Activated B cell treated with CpG ODN at 0.5 μM for 24 hours (primary cell): ENCODE measurements at regions of chr18 and their contacts with region 1.

Region 1: DNA sequence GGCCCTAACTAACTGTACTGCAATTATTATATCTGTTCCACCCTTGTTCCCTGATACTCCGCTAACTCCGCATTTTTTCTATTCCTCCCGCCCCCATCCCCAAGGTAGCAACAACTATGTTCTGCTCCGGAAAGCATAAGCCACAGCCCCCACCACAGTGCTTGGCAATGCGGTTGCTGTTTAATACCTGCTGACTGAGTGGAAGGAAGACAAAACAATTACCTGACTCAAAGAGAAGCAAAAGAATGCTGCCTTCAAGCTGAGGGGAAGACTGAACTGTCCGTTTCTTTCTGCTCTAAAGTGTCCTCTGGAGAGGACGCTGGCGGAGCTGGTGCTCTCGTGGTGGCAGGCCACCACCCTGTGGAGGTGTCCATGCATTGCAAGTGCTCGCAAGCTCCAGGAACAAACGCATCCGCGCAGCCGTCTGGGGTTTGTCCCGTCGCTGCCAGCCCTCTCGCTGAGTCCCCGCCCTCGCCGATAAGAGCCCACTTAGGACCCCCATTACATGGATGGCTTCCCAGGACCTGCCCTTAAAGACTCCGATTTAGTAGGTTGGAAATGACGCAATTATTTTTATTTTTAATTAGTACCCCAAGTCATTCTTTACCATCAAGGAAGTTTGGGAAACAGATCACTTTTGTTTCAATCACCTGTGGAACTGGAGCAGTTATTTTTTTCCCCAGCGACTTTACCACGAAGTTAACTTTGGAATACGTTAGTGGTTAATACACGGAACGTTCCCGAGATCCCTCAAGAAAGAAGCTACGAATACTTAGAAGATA is 1.6 kb upstream of the MYL12A start:
- DNase-seq: peak; percentile 65
- ATAC-seq: peak; percentile 62
- H3K4me3 Mint-ChIP-seq: peak overlapping the region; percentile 94
- H3K27ac Mint-ChIP-seq: peak overlapping the region; percentile 99
- H3K4me1 Mint-ChIP-seq: peaks cover 44% of the 10 kb centered on the region
- H3K27me3 Mint-ChIP-seq: no peaks in the 10 kb centered on the region
- CTCF ChIP-seq: peak; percentile 54

Region 2: GRCh38 chr18:2618009-2618408 is 628.0 kb before region 1 on chr18:
- CTCF ChIA-PET with region 1: no interaction called
- POLR2A ChIA-PET with region 1: no interaction called
- intact Hi-C with region 1: no loop called
- DNase-seq: no peak
- ATAC-seq: no peak
- H3K4me3 Mint-ChIP-seq: no peak overlapping the region
- H3K27ac Mint-ChIP-seq: no peak overlapping the region
- H3K4me1 Mint-ChIP-seq: peaks cover 3% of the 10 kb centered on the region
- H3K27me3 Mint-ChIP-seq: no peaks in the 10 kb centered on the region
- CTCF ChIP-seq: no peak

Region 3: DNA sequence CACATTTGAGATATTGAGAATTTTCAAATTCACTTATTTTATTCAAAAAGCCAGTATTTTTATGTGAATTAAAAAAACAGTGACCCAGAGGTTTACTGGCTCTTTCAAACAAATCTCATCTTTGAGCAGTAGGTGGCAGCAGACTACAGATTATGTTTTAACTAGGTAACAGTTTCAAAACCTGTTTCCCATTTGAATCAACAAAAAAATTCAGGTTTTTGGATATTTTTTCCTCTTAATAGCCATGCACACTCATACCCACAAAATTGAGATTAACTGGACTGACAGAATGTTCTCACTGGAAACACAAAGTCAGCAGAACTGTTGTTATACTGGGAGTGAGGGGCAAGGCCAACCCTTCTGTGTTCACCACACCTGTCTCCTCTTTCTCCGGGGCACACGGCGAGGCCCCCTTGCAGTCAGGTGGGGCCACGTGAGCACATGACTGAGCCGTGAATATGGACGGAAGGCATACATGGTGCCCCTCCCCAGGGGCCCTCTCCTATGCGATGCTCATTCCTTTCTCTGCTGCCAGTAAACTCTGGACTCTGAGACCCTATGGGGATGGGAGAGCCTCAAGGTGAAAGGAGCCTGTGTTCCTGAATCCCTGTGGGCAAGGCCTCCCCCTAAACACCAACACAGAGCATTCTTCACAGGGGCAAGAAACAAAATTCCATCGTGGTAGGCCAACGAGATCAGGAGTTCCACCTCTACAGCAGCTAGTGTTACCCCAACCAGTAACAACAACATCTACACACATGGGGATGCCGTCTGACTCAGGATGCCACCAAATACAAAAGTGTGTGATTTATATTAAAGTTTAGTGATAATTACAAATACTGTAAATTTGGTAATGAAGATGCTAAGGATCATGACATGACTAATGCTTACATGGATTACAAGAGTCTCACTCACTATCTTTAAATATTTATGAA is 313.5 kb before region 1 on chr18:
- CTCF ChIA-PET with region 1: interaction called, 34 read pairs
- POLR2A ChIA-PET with region 1: interaction called, 7 read pairs
- intact Hi-C with region 1: loop called (anchors 1 kb)
- DNase-seq: no peak
- ATAC-seq: peak; percentile 66
- H3K4me3 Mint-ChIP-seq: no peak overlapping the region
- H3K27ac Mint-ChIP-seq: peak overlapping the region; percentile 76
- H3K4me1 Mint-ChIP-seq: peaks cover 8% of the 10 kb centered on the region
- H3K27me3 Mint-ChIP-seq: no peaks in the 10 kb centered on the region
- CTCF ChIP-seq: peak; percentile 49

Region 4: DNA sequence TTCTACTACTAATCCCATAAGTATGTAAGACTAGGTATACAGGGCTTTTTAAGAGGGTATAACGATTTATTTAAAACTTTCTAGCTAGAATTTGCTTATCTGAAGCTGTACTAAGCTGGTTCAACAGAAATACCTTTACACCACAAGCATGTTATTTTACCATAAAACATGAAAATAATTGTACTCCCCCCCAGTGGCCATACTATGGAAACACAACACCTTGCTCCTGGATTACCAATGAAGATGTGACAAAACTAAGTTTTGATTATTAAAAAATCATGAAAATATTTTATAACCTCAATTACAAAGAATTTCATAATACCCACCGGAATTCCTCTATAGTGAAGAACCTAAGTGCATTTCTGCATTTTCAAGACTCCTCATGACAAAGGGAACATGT is 260.4 kb before region 1 on chr18:
- CTCF ChIA-PET with region 1: interaction called, 47 read pairs
- POLR2A ChIA-PET with region 1: interaction called, 41 read pairs
- intact Hi-C with region 1: loop called (anchors 1 kb)
- DNase-seq: no peak
- ATAC-seq: peak; percentile 82
- H3K4me3 Mint-ChIP-seq: no peak overlapping the region
- H3K27ac Mint-ChIP-seq: no peak overlapping the region
- H3K4me1 Mint-ChIP-seq: peaks cover 55% of the 10 kb centered on the region
- H3K27me3 Mint-ChIP-seq: no peaks in the 10 kb centered on the region
- CTCF ChIP-seq: no peak

Region 5: GRCh38 chr18:3117493-3118192 is 128.4 kb before region 1 on chr18:
- CTCF ChIA-PET with region 1: interaction called, 5 read pairs
- POLR2A ChIA-PET with region 1: interaction called, 5 read pairs
- intact Hi-C with region 1: loop called (anchors 1 kb)
- DNase-seq: no peak
- ATAC-seq: no peak
- H3K4me3 Mint-ChIP-seq: no peak overlapping the region
- H3K27ac Mint-ChIP-seq: no peak overlapping the region
- H3K4me1 Mint-ChIP-seq: no peaks in the 10 kb centered on the region
- H3K27me3 Mint-ChIP-seq: peaks cover 2% of the 10 kb centered on the region
- CTCF ChIP-seq: no peak

Region 6: DNA sequence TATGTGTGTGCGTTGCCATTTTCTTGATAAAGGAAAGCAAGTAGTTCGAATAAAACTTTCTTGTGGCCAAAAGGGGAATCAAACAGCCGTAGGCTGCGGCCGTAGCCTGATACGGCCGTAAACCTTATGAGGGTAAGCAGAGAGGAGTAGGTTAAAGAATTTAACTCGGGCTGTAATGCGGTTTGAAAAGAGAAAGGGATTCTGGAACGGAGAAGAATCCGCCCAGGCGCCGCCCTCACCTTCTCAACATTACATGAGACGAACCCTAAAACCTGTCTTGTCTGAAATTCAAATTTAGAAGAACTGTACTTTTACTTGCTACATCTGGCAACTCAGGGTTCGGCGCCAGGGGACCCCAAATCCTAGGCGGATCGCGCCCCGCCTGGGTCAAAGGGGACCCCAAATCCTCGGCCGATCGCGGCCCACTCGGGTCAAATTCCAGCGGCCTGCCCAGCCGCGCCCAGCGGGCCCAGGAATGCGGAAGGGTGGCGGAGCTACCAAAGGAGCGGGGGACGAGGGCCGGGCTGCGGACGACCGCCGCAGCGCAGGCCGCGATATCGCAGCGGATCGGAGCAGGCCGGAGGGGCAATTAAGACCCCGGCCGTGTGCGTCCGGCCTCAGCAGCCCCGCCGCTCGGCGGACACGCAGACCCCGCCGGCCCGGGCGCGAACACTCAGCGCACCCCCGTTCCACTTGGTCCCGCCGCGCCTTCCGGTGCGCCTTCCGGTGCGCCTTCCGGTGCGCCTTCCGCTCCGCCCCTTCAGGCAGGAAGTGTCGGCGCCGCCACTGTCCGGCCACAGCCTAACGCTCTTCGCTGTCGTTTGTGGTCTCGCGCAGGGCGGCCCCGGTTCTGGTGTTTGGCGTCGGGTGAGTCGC is 15.6 kb after region 1 on chr18 and contains the start of gene MYL12B:
- CTCF ChIA-PET with region 1: interaction called, 11 read pairs
- POLR2A ChIA-PET with region 1: interaction called, 166 read pairs
- intact Hi-C with region 1: loop called (anchors 1 kb)
- DNase-seq: peak; percentile 81
- ATAC-seq: peak; percentile 83
- H3K4me3 Mint-ChIP-seq: peak within 1 kb of the TSS; percentile 94
- H3K27ac Mint-ChIP-seq: peak within 1 kb of the TSS; percentile 97
- H3K4me1 Mint-ChIP-seq: peaks cover 80% of the 10 kb centered on the region
- H3K27me3 Mint-ChIP-seq: no peaks in the 10 kb centered on the region
- CTCF ChIP-seq: no peak
- total RNA-seq, gene MYL12B: 185 and 198 TPM in 2 replicates

Region 7: DNA sequence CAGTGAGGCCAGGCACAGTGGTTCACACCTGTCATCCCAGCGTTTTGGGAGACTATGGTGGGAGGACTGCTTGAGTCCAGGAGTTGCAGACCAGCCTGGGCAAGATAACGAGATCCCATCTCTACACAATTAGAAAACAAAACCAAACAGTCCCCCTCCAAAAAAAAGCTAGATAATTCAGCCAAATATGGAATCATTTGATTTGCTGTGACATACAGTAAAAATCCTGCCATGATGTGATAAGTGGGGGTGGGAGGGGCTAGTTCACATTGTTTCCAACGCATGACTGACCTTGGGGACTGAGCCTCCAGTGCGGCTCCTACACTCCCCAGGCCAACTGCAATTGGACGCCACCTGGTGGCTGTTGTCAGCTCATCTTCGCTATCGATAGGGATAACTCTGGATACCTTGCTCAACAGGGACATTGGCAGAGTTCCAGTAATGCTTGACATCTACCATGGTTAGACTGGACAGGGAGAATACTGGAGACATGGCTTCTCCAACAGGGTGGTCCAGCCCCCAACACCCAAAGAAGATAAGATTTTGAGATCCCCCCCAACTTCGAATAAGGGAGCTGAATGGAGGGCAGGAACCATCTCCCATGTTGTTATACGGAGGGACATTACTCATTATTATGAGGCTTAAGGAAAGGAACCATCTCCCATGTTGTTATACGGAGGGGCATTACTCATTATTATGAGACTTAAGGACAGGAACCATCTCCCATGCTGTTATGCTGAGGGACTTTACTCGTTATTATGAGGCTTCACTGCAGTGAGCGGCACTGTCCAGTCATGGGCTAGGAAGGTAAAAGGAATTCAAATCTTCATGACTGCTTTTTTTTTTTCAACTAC is 339.8 kb after region 1 on chr18:
- CTCF ChIA-PET with region 1: no interaction called
- POLR2A ChIA-PET with region 1: interaction called, 7 read pairs
- intact Hi-C with region 1: loop called (anchors 2 kb)
- DNase-seq: peak; percentile 40
- ATAC-seq: peak; percentile 45
- H3K4me3 Mint-ChIP-seq: peak overlapping the region; percentile 74
- H3K27ac Mint-ChIP-seq: peak overlapping the region; percentile 96
- H3K4me1 Mint-ChIP-seq: peaks cover 53% of the 10 kb centered on the region
- H3K27me3 Mint-ChIP-seq: no peaks in the 10 kb centered on the region
- CTCF ChIP-seq: no peak

Region 8: DNA sequence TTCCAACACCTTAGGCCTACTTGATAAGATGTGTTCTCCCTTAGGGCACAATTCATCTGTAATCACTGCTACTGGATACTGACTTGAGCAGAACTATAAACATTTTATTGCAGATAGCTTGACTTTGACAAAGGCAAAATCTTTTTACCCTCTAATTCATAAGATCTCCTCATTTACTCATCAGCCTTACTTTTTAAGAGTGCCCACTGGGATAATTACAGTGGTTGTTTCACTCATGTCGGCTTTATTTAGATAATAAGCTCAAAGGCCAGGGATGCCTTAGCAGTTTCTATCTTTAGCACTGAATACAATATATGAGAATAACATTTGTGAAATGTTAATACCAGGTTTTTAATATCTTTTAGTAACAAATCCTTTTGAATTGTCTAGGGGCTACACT is 1065.1 kb after region 1 on chr18:
- CTCF ChIA-PET with region 1: no interaction called
- POLR2A ChIA-PET with region 1: no interaction called
- intact Hi-C with region 1: no loop called
- DNase-seq: no peak
- ATAC-seq: no peak
- H3K4me3 Mint-ChIP-seq: no peak overlapping the region
- H3K27ac Mint-ChIP-seq: no peak overlapping the region
- H3K4me1 Mint-ChIP-seq: no peaks in the 10 kb centered on the region
- H3K27me3 Mint-ChIP-seq: no peaks in the 10 kb centered on the region
- CTCF ChIP-seq: no peak